ENCODE measurements at regions of chr11 and their contacts with region 1.

Region 1: GRCh38 chr11:36265793-36266628 is 23.2 kb downstream of the COMMD9 start:
- DNase-seq: peak; percentile 84
- H3K4me3 Mint-ChIP-seq: no peak overlapping the region
- H3K27ac Mint-ChIP-seq: no peak overlapping the region
- H3K4me1 Mint-ChIP-seq: peaks cover 3% of the 10 kb centered on the region
- H3K27me3 Mint-ChIP-seq: peaks cover 4% of the 10 kb centered on the region

Region 2: DNA sequence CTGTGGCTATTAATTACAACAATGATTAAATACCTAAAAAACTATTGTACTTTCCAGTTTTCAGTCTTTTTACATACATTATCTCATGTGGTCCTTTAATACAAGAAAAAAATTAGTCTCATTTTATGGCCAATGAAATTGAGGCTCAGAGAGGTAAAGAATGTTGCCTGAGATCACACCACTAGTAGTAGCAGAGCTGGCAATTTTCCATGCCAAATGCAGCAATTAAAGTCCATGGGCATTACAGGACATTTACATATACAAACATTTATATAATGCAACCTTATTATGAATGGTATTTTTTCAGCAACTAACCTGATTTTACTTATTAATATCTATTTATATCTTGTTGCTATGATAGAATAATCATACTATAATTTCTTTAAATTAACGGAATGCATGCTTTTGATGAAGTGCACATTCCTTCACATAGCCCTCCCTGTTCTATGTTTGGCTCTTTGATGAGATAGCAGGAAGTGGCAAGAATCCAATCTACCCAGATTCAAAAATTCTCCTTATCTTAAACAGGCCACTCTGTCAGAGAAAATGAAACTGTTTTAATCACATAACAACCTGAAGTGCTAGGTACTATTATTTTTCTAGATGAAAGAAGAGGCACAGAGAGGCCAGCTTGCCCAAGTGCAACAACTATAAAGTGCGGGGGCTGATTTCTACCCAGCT is 443.1 kb before region 1 on chr11:
- intact Hi-C with region 1: loop called (anchors 1 kb)
- DNase-seq: no peak
- H3K4me3 Mint-ChIP-seq: no peak overlapping the region
- H3K27ac Mint-ChIP-seq: no peak overlapping the region
- H3K4me1 Mint-ChIP-seq: peaks cover 3% of the 10 kb centered on the region
- H3K27me3 Mint-ChIP-seq: peaks cover 4% of the 10 kb centered on the region

Region 3: GRCh38 chr11:36041988-36042611 is 223.9 kb before region 1 on chr11:
- intact Hi-C with region 1: loop called (anchors 5 kb)
- DNase-seq: no peak
- H3K4me3 Mint-ChIP-seq: no peak overlapping the region
- H3K27ac Mint-ChIP-seq: no peak overlapping the region
- H3K4me1 Mint-ChIP-seq: no peaks in the 10 kb centered on the region
- H3K27me3 Mint-ChIP-seq: peaks cover 4% of the 10 kb centered on the region

Region 4: DNA sequence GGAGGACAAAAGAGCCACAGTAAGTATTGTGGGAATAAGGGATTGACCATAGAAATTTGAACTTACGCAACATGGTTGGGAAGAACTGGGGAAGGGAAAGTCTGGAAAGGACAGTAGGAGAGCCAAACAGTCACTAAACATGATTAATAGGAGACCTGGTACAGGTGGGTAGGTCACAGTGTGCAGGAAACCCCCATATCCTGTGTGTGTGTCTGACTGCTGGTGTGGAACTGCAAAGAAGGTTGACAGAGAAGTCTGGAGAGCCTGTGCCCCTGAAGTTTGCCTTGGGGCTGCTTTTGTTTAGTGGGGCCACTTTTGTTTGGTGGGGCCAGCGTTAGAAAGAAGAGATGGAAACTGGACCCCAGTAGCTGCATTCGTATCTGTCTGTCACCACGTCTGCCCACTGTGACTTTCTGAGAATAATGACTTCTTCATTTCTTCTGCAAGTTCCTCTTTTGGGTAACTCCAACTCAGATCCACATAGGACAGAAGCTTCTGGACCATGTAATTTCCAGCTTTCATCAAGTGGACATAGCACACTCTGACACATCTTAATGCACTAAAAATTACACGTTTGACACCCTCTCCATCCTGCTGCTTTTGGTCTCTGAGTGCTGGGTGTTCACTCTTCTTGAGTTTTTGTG is 458.9 kb after region 1 on chr11:
- intact Hi-C with region 1: no loop called
- DNase-seq: no peak
- H3K4me3 Mint-ChIP-seq: no peak overlapping the region
- H3K27ac Mint-ChIP-seq: no peak overlapping the region
- H3K4me1 Mint-ChIP-seq: no peaks in the 10 kb centered on the region
- H3K27me3 Mint-ChIP-seq: peaks cover 3% of the 10 kb centered on the region

Measured in activated CD4-positive, alpha-beta T cell treated with anti-CD3 and anti-CD28 coated beads, Interleukin-2, amount 10 ng/mL, durations not matched to agents 24 days and 14 days (primary cell).